ENCODE measurements at regions of chr12 and their contacts with region 1.

Region 1: GRCh38 chr12:24991209-24992049 is 42.5 kb upstream of the BCAT1 start:
- DNase-seq: peak in 1 of 2 experiments; percentile 69
- H3K4me3 ChIP-seq: no peak overlapping the region
- H3K4me3 Mint-ChIP-seq: no peak overlapping the region
- H3K27ac Mint-ChIP-seq: no peak overlapping the region
- H3K4me1 ChIP-seq: no peaks in the 10 kb centered on the region
- H3K4me1 Mint-ChIP-seq: peaks cover 17% of the 10 kb centered on the region
- H3K27me3 ChIP-seq: no peaks in the 10 kb centered on the region
- H3K27me3 Mint-ChIP-seq: no peaks in the 10 kb centered on the region
- CTCF ChIP-seq: peak; percentile 47 to 74

Region 2: DNA sequence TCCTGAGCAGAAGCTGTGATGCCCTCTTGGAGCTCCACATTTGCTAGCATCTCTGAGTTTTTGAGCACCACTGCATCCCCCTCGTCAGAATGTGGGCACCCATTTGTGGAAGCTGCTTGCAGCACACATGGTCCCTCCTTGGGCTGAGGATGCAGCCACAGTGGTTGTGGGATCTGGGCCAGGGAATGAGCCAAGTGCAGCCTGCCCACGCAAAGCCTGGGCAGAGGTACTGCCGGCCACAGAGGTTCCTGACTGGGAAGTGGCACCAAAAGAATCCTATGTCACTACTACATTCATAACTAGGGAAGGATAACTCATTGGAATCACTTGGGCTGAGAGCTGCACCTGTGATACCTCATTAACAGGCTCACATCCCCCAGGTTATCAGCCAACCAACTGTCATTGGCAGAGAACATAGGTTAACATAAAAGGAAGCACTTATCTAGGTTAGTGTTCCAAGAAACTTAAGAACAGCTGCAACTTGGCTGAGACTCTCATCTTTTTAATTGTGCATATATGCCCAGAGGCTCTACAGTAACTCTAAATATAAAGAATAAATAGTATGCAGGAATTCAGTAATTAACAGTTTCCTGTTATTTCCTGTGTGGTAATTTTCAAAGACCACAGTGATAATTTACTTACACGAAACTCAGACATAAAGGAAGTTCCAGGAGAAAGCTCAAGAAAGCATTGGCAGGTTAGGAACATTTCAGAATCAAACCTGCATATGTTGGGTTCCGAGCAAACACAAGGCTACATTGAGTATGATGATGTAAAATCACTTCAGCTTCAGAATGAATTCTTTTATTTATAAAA is 187.8 kb before region 1 on chr12:
- CTCF ChIA-PET with region 1: no interaction called
- POLR2A ChIA-PET with region 1: no interaction called
- intact Hi-C with region 1: no loop called
- DNase-seq: no peak
- H3K4me3 ChIP-seq: no peak overlapping the region
- H3K4me3 Mint-ChIP-seq: no peak overlapping the region
- H3K27ac Mint-ChIP-seq: no peak overlapping the region
- H3K4me1 ChIP-seq: no peaks in the 10 kb centered on the region
- H3K4me1 Mint-ChIP-seq: no peaks in the 10 kb centered on the region
- H3K27me3 ChIP-seq: no peaks in the 10 kb centered on the region
- H3K27me3 Mint-ChIP-seq: no peaks in the 10 kb centered on the region
- CTCF ChIP-seq: no peak

Region 3: DNA sequence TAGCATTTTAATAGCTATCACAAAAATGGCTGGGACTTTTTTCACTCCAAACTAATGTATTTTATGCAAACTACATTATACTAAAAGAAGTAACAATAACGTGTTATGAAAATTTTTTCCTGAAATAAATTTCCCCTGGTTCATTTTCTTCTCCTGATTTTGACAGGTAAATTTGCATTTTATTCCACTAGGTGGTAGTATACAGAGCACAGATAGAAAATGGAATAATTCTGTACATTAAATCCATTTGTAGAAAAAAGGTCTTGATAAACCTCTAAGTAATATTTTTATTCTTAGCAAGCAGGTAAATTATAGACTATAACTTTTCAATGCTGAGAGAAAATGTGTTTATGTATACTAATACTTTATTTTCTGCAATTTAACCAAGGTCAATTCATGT is 139.0 kb before region 1 on chr12:
- CTCF ChIA-PET with region 1: no interaction called
- POLR2A ChIA-PET with region 1: no interaction called
- intact Hi-C with region 1: loop called (anchors 2 kb)
- DNase-seq: no peak
- H3K4me3 ChIP-seq: no peak overlapping the region
- H3K4me3 Mint-ChIP-seq: no peak overlapping the region
- H3K27ac Mint-ChIP-seq: peak overlapping the region; percentile 39
- H3K4me1 ChIP-seq: no peaks in the 10 kb centered on the region
- H3K4me1 Mint-ChIP-seq: peaks cover 32% of the 10 kb centered on the region
- H3K27me3 ChIP-seq: no peaks in the 10 kb centered on the region
- H3K27me3 Mint-ChIP-seq: no peaks in the 10 kb centered on the region
- CTCF ChIP-seq: peak; percentile 54 to 61

Region 4: GRCh38 chr12:24960222-24960855 is 31.1 kb before region 1 on chr12:
- CTCF ChIA-PET with region 1: no interaction called
- POLR2A ChIA-PET with region 1: no interaction called
- intact Hi-C with region 1: loop called (anchors 1 kb)
- DNase-seq: peak; percentile 56 to 68
- H3K4me3 ChIP-seq: no peak overlapping the region
- H3K4me3 Mint-ChIP-seq: no peak overlapping the region
- H3K27ac Mint-ChIP-seq: no peak overlapping the region
- H3K4me1 ChIP-seq: peaks cover 16% of the 10 kb centered on the region; the same call in 1 of the 2 replicates
- H3K4me1 Mint-ChIP-seq: peaks cover 28% of the 10 kb centered on the region
- H3K27me3 ChIP-seq: no peaks in the 10 kb centered on the region
- H3K27me3 Mint-ChIP-seq: no peaks in the 10 kb centered on the region
- CTCF ChIP-seq: peak; percentile 60 to 78

Region 5: DNA sequence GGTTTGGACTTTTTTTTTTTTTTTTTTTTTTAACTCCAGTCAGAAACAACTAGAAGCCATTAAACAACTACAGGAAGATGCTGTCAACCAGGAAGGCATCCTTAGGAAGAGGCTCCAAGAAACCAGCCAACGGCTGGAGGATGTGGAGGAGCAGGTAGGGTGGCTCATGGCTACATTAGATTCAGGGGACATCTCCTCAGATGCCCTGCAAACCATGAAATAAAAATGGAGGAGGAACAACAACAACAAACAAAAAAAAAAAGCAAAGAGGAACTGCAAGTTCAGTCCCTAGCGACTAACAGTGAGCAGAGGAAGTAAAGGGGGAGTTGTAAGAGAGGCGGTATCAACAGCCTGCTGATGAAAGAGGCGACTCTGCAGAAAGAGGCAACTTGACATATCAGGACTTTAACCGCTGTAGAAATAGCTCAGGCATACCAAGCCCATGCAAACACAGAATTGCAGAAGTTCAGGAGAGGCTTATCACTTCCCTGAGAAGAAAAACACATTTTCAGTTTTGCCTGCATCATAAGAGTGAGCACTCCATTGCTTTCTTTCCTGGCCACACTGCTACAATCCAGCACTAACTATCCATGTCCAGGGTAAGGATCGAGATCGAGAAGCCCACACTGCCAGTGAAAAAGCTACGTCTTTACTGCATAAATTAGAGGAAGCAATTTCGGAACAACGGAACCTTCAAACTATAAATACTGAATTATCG is 60.9 kb after region 1 on chr12:
- CTCF ChIA-PET with region 1: no interaction called
- POLR2A ChIA-PET with region 1: no interaction called
- intact Hi-C with region 1: loop called (anchors 5 kb)
- DNase-seq: peak; percentile 58 to 60
- H3K4me3 ChIP-seq: peak overlapping the region; percentile 27
- H3K4me3 Mint-ChIP-seq: peak overlapping the region; percentile 56
- H3K27ac Mint-ChIP-seq: peak overlapping the region; percentile 2
- H3K4me1 ChIP-seq: peaks cover 9% of the 10 kb centered on the region; the same call in 1 of the 2 replicates
- H3K4me1 Mint-ChIP-seq: peaks cover 19% of the 10 kb centered on the region
- H3K27me3 ChIP-seq: no peaks in the 10 kb centered on the region
- H3K27me3 Mint-ChIP-seq: no peaks in the 10 kb centered on the region
- CTCF ChIP-seq: no peak

Region 6: DNA sequence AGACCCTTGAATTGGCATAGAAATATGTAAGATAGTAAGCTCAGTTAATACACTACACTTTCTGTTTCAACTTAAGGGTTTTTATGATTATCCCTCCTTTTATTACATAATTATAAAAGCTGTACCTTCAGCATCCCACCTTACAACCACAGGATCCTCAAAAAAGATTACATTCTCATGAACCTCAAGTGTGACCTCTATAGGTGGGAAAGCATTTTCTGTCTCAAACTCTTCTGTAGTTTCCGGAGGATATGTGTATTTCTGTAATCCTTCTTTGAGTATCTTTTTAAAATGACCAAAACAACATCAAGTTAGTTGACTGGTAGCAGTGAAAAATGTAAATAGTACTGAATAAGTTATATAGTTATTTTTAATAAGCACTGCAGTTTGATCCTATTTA is 127.6 kb after region 1 on chr12:
- CTCF ChIA-PET with region 1: interaction called, 3 read pairs
- POLR2A ChIA-PET with region 1: no interaction called
- intact Hi-C with region 1: loop called (anchors 1 kb)
- DNase-seq: no peak
- H3K4me3 ChIP-seq: no peak overlapping the region
- H3K4me3 Mint-ChIP-seq: no peak overlapping the region
- H3K27ac Mint-ChIP-seq: no peak overlapping the region
- H3K4me1 ChIP-seq: peaks cover 7% of the 10 kb centered on the region; the same call in 1 of the 2 replicates
- H3K4me1 Mint-ChIP-seq: peaks cover 23% of the 10 kb centered on the region
- H3K27me3 ChIP-seq: no peaks in the 10 kb centered on the region
- H3K27me3 Mint-ChIP-seq: no peaks in the 10 kb centered on the region
- CTCF ChIP-seq: peak; percentile 48 to 53

Region 7: DNA sequence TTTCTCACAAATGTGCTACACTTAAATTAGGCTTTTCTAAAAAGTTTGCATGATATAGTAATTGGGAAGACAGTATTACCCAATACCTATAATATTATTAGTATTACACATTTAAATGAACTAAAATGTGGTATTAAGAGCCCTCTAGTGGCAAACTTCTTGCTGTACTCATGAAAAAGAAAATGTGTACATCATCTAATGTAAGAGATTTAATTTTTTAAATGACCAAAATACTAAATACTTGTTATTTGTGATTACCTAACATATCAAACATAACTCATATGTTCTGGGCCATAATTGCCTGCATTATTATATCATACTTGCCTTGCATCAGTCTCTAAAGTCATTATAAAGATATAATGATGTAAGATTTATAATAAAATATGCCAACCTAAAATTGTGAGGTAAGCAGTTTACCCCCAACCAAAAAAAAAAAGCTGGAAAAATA is 139.3 kb after region 1 on chr12:
- CTCF ChIA-PET with region 1: interaction called, 5 read pairs
- POLR2A ChIA-PET with region 1: no interaction called
- intact Hi-C with region 1: loop called (anchors 1 kb)
- DNase-seq: peak in 1 of 2 experiments; percentile 52
- H3K4me3 ChIP-seq: no peak overlapping the region
- H3K4me3 Mint-ChIP-seq: no peak overlapping the region
- H3K27ac Mint-ChIP-seq: no peak overlapping the region
- H3K4me1 ChIP-seq: peaks cover 26% of the 10 kb centered on the region
- H3K4me1 Mint-ChIP-seq: peaks cover 32% of the 10 kb centered on the region
- H3K27me3 ChIP-seq: no peaks in the 10 kb centered on the region
- H3K27me3 Mint-ChIP-seq: no peaks in the 10 kb centered on the region
- CTCF ChIP-seq: peak; percentile 63 to 84

Region 8: DNA sequence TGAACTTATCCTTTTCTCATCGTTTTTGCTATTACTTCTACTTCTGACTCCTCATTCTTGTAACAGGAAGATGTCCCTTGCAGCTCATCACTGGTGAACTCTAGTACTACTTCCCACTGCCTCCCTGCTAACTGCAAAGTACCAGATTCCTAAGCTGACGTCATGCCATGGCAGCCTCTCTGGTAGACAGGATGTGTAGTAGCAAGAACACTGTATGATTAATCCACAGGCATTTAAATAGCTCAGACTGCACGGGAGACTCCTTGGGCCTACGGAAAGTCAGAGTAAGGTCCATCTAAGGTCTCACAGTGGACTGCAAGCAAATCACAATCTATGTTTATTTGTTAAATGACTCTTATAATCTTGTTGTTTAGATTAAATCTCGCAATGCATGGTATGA is 160.0 kb after region 1 on chr12:
- CTCF ChIA-PET with region 1: interaction called, 6 read pairs
- POLR2A ChIA-PET with region 1: no interaction called
- intact Hi-C with region 1: loop called (anchors 1 kb)
- DNase-seq: no peak
- H3K4me3 ChIP-seq: no peak overlapping the region
- H3K4me3 Mint-ChIP-seq: no peak overlapping the region
- H3K27ac Mint-ChIP-seq: no peak overlapping the region
- H3K4me1 ChIP-seq: no peaks in the 10 kb centered on the region
- H3K4me1 Mint-ChIP-seq: peaks cover 6% of the 10 kb centered on the region
- H3K27me3 ChIP-seq: no peaks in the 10 kb centered on the region
- H3K27me3 Mint-ChIP-seq: no peaks in the 10 kb centered on the region
- CTCF ChIP-seq: no peak